ENCODE measurements at regions of chr6 and their contacts with region 1.

Region 1: GRCh38 chr6:3045369-3045768 is 22.9 kb upstream of the RIPK1 start:
- DNase-seq: no peak
- H3K4me3 ChIP-seq: no peak overlapping the region
- H3K27ac ChIP-seq: no peak overlapping the region
- H3K4me1 ChIP-seq: no peaks in the 10 kb centered on the region
- H3K27me3 ChIP-seq: no peaks in the 10 kb centered on the region
- CTCF ChIP-seq: no peak
- EP300 ChIP-seq: no peak
- POLR2A ChIP-seq: no peak

Region 2: DNA sequence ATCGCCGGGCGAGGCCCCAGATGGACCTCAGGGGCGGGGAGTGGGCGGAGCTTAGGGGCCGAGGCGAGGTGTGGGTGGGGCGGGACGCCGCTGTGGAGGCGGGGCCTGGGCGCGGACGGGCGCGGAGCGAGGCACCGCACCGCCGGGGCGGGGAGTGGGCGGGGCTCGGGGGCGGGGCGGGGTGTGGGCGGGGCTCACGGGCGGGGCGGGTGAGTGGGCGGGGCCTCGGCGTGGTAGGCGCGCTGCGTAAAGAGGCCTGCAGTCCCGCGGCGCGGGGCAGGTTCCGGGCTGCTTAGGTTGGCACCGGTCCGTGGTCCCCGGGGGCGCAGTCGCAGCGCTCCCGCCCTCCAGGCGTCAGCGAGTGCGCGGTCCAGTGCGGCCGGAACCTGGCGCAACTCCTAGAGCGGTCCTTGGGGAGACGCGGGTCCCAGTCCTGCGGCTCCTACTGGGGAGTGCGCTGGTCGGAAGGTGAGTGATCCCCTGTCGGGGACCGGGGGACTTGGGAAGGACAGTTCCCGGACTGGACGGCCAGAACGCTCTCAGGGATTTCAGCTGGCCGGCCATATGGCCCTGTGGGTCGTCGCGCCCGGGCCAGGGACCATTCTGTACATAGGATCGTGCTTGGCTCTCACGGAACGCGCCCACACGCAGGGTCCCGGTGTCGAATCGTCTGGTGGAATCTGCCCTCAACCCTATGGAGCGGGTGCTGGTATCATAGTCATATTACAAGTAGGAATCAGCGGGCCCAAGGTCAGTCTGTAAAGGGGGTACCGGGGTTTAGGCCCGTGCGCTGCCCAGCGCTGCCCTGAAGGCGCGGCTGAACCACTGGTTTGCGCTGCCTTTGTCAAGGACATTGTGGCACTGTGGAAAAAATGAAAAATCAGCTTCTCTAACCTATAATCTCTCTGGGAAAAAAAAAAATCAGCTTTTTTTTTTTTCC is 45.5 kb before region 1 on chr6 and contains the start of gene NQO2:
- intact Hi-C with region 1: loop called in 1 of 4 experiments (anchors 5 kb)
- DNase-seq: peak; percentile 94 to 98 (median 97)
- H3K4me3 ChIP-seq: peak within 1 kb of the TSS; percentile 86
- H3K27ac ChIP-seq: peak within 1 kb of the TSS; percentile 51 to 68
- H3K4me1 ChIP-seq: peaks cover 2% of the 10 kb centered on the region
- H3K27me3 ChIP-seq: no peaks in the 10 kb centered on the region
- CTCF ChIP-seq: peak in 1 of 3 donors; percentile 24
- EP300 ChIP-seq: no peak
- POLR2A ChIP-seq: peak; percentile 86
- total RNA-seq, gene NQO2: 16.2 to 41.1 (median 26.8) TPM

Region 3: DNA sequence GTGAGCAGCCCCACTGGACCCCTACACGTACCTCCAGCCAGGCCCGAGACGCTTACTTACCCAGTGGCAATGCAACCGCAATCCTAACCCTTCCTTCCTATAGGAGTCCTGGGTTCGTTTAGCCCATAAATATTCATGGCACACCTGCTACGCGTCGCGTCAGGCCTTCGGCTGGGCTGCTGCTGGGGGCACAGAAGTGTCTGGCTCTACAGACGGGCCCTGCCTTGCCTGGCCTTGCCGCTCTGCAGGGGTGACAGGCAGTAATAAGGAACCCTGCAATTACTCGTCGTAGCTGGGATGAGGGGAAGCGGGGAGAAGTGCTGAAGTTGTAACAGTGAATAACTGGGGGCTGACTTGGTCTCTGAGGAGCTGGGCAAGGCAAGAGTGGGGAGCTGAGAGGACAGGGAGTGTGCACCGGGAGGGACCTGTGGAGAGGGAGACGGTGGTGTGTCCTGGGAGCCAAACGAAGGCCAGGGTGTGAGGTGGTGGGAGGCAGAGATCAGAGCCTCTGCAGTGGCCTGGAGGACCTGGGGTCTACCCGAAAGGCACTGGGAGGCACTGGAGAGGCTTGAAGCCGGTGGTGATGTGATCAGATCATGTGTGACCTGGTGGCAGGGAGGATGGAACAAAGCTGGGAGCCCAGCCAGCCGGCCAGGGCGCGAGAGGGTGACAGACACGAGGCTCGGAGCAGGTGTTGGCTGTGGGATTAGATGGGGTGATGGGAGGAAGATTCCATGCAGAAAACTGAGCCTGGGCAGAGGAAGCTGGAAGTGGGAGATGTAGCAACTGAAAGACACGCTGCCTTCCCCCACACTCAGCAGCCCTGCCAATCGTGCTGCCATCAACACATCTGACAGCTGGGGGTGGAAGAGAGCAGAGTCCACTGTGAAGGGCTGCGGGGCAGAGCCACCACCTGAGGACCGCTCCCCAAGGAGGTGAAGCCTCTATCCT is 249.8 kb after region 1 on chr6:
- intact Hi-C with region 1: no loop called
- DNase-seq: peak in 2 of 5 donors; percentile 4 to 7
- H3K4me3 ChIP-seq: no peak overlapping the region
- H3K27ac ChIP-seq: no peak overlapping the region
- H3K4me1 ChIP-seq: peaks cover 1% of the 10 kb centered on the region
- H3K27me3 ChIP-seq: no peaks in the 10 kb centered on the region
- CTCF ChIP-seq: no peak
- EP300 ChIP-seq: no peak
- POLR2A ChIP-seq: no peak